Left ventricle myocardium inferior (tissue), 1 donor: ENCODE measurements at regions of chr17 and their contacts with region 1.

Region 1: DNA sequence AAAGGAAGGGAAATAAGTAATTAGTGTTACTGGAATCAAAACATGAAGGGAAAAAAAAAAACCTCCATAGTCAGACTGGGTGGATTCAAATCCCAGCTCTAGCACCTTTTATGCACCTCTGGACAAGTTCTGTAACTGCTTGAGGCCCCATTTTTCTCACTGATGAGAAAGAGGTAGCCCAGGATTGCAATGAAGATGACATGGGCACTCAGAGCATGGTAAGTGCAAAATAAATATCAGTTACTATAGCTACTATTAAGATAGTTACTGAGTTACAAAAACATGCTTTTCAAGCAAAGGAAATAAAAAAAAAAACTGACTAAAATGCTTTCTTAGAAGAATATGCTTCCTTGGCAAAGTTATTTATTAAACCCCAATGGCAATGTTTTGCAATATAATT is 58.8 kb downstream of the CEP95 start:
- DNase-seq: no peak
- H3K4me3 ChIP-seq: no peak overlapping the region
- H3K27ac ChIP-seq: no peak overlapping the region
- H3K4me1 ChIP-seq: peaks cover 5% of the 10 kb centered on the region
- H3K27me3 ChIP-seq: no peaks in the 10 kb centered on the region
- CTCF ChIP-seq: no peak

Region 2: GRCh38 chr17:64648234-64648633 is 82.7 kb after region 1 on chr17:
- intact Hi-C with region 1: loop called (anchors 10 kb)
- DNase-seq: no peak
- H3K4me3 ChIP-seq: no peak overlapping the region
- H3K27ac ChIP-seq: no peak overlapping the region
- H3K4me1 ChIP-seq: peaks cover 13% of the 10 kb centered on the region
- H3K27me3 ChIP-seq: no peaks in the 10 kb centered on the region
- CTCF ChIP-seq: no peak